GM10248 (cell line): ENCODE measurements at regions of chr1 and their contacts with region 1.

Region 1: DNA sequence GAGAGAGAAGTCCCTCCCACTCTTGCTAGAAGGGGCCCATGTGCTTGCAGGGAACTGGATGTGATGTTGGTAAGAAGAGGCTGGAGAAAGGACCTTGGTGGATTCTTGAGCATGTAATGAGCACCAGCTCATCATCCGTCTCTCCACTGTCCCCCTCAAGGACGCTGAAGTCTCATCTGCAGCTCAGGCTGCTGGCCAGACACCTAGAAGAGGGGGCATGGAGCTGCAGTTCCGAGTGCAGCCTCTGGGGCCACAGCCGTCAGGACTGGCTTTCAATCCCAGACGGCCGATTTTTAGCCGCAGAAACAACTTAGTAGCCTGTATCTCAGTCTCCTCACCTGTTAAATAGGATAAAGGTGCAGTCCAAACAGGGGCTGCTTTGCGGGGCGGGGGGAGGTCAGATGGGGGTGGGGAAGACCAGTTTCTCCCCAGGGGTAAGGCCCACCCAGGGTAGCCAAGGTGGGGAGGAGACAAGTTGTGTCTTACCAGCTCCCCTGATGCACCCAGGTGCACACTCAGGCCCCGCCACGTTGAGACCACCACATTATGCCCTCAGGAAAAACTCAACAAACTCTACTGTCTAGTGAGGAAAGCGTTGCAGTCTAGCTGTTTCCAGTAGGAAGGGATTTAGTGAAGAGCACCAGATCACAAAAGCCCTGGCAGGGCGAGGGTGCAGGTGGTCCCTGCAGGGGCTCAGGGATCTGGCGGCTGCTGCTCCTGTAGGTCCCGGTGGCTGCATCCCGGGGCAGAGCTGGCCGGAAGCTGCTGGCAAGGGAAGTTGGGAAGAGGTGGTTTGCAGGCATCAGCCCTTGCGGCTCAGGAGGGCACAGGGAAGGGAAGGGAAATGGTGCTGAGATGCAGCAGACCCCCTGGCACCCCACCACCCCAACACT is 29.5 kb downstream of the LDLRAP1 start:
- DNase-seq: peak; percentile 78
- CTCF ChIP-seq: peak; percentile 52

Region 2: DNA sequence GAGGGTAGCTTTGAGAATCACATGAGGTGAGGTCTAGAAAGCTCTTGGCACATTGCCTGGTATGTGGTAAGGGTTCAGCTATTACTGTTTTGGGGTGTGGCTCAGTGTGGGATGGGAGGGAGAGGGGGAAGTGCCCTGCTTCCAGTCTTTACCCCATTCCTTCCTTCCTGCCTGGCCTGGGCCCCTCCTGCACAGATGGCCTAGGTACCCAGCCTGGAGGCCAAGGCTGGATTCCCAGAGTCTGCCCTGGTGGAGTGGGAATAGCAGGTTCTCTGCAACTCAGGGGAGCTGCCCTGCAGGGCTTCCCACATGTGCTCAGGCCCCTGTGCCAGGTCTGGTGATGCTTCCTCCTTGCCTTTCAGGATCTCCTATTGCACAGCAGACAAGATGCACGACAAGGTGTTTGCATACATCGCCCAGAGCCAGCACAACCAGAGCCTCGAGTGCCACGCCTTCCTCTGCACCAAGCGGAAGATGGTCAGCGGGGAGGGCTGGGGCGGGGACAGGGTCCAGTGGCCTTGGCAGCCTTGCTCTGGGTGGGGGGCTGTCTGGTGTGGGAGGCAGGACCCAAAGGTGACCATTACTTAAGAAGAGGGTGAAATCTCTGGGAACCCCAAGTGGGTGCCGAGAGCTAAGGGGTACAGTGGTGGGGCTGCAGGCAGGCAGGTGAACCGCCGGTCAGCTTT is 16.0 kb before region 1 on chr1:
- CTCF ChIA-PET with region 1: interaction called, 34 read pairs
- POLR2A ChIA-PET with region 1: no interaction called
- DNase-seq: no peak
- CTCF ChIP-seq: no peak